ENCODE measurements at regions of chr4 and their contacts with region 1.

Region 1: GRCh38 chr4:77734928-77735327 is 84.2 kb downstream of the CNOT6L start:
- DNase-seq: peak; percentile 8
- H3K4me3 Mint-ChIP-seq: peak overlapping the region; percentile 49
- H3K27ac Mint-ChIP-seq: peak overlapping the region; percentile 38
- H3K4me1 Mint-ChIP-seq: peaks cover 9% of the 10 kb centered on the region
- H3K27me3 Mint-ChIP-seq: no peaks in the 10 kb centered on the region
- CTCF ChIP-seq: no peak

Region 2: DNA sequence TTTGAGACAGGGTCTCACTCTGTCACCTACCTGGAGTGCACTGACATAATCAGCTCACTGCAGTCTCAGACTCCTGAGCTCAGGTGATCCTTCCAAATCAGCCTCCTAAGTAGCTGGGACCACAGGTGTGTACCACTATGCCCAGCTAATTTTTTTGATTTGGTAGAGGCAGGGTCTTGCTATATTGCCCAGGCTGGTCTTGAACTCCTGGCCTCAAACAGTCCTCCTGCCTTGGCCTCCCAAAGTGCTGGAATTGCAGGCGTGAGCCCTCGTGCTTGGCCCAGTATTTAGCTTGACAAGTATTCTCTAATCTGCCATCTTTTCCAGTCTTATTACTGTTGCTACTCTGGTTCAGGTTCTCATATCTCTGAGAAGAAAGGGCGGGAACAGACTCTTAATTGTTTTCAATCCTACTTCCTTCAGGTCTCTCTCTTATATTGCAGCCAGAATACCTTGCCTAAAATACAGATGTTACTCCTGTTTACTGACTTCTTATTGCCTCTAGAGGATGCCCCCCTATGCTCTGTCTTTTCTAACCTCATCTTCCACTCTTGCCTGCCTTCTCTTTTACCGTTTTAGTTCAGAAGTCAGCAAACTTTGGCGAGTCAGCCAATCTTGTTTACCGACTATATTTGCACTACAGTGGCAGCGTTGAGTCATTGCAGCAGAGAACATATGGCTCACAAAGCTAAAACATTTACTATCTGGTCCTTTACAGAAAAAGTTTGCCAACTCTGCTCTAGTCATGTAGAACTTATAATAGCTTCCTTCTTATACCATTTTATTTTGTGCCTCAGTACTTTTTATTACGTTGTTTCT is 146.7 kb after region 1 on chr4:
- CTCF ChIA-PET with region 1: no interaction called
- intact Hi-C with region 1: loop called (anchors 10 kb)
- DNase-seq: no peak
- H3K4me3 Mint-ChIP-seq: no peak overlapping the region
- H3K27ac Mint-ChIP-seq: no peak overlapping the region
- H3K4me1 Mint-ChIP-seq: peaks cover 11% of the 10 kb centered on the region
- H3K27me3 Mint-ChIP-seq: no peaks in the 10 kb centered on the region
- CTCF ChIP-seq: no peak

Region 3: GRCh38 chr4:78092850-78093249 is 357.9 kb after region 1 on chr4:
- CTCF ChIA-PET with region 1: no interaction called
- intact Hi-C with region 1: no loop called
- DNase-seq: no peak
- H3K4me3 Mint-ChIP-seq: no peak overlapping the region
- H3K27ac Mint-ChIP-seq: no peak overlapping the region
- H3K4me1 Mint-ChIP-seq: no peaks in the 10 kb centered on the region
- H3K27me3 Mint-ChIP-seq: no peaks in the 10 kb centered on the region
- CTCF ChIP-seq: no peak